Naive thymus-derived CD4-positive, alpha-beta T cell (primary cell): ENCODE measurements at regions of chr16 and their contacts with region 1.

Region 1: DNA sequence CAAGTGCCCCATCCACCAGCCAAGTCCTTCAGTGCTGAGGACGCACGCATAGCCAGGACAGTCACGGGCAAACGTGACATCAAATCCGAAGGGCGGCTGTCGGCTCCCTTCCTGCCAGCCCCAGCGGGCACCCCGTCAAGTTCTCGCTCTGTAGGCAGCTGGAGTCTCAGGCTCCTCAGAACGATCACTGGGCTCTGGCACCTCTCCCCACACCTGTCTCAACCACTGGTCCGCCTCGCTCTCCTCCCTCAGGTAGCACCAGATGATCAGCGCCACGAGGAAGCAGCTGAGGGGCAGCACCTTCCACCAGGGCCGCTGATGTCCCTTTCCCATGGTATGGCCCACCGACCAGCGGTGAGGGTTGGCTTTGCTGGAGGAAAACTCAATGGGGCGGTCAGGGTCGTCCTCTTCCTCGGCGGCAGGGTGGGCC is 421 bp downstream of the UQCC4 start:
- DNase-seq: peak in 1 of 9 donors; percentile 30
- ATAC-seq: no peak
- H3K4me3 ChIP-seq: peak overlapping the region; percentile 66
- H3K4me3 Mint-ChIP-seq: peak overlapping the region; percentile 90 to 94 (median 92)
- H3K27ac ChIP-seq: peak overlapping the region; percentile 95
- H3K27ac Mint-ChIP-seq: peak overlapping the region; percentile 25 to 98 (median 98)
- H3K4me1 ChIP-seq: peaks cover 6 to 11% of the 10 kb centered on the region in 2 donors
- H3K4me1 Mint-ChIP-seq: peaks cover 4 to 31% (median 20%) of the 10 kb centered on the region in 7 donors
- H3K27me3 ChIP-seq: no peaks in the 10 kb centered on the region
- H3K27me3 Mint-ChIP-seq: peaks cover 0 to 5% (median 0%) of the 10 kb centered on the region in 5 donors

Region 2: GRCh38 chr16:1351582-1352362 is 68.4 kb before region 1 on chr16 and contains the starts of genes GNPTG and TSR3:
- CTCF ChIA-PET with region 1: no interaction called
- POLR2A ChIA-PET with region 1: no interaction called
- intact Hi-C with region 1: loop called in 1 of 2 experiments (anchors 5 kb)
- DNase-seq: peak; percentile 77 to 96 (median 86)
- ATAC-seq: peak; percentile 93
- H3K4me3 ChIP-seq: peak within 1 kb of the TSS; percentile 71
- H3K4me3 Mint-ChIP-seq: peak within 1 kb of the TSS; percentile 81 to 90 (median 86)
- H3K27ac ChIP-seq: peak within 1 kb of the TSS; percentile 81
- H3K27ac Mint-ChIP-seq: peak within 1 kb of the TSS; percentile 75 to 96 (median 86)
- H3K4me1 ChIP-seq: peaks cover 13 to 21% of the 10 kb centered on the region in 2 donors
- H3K4me1 Mint-ChIP-seq: peaks cover 28 to 45% (median 34%) of the 10 kb centered on the region in 7 donors
- H3K27me3 ChIP-seq: no peaks in the 10 kb centered on the region
- H3K27me3 Mint-ChIP-seq: peaks cover 0 to 5% (median 0%) of the 10 kb centered on the region in 5 donors
- total RNA-seq, gene GNPTG: 37.9 to 57.7 (median 48.6) TPM
- total RNA-seq, gene TSR3: 21.0 to 50.4 (median 33.3) TPM

Region 3: GRCh38 chr16:1443403-1443973 is 23.4 kb after region 1 on chr16:
- CTCF ChIA-PET with region 1: no interaction called
- POLR2A ChIA-PET with region 1: no interaction called
- intact Hi-C with region 1: no loop called
- DNase-seq: no peak
- ATAC-seq: no peak
- H3K4me3 ChIP-seq: no peak overlapping the region
- H3K4me3 Mint-ChIP-seq: no peak overlapping the region
- H3K27ac ChIP-seq: no peak overlapping the region
- H3K27ac Mint-ChIP-seq: no peak overlapping the region
- H3K4me1 ChIP-seq: no peaks in the 10 kb centered on the region
- H3K4me1 Mint-ChIP-seq: no peaks in the 10 kb centered on the region
- H3K27me3 ChIP-seq: no peaks in the 10 kb centered on the region
- H3K27me3 Mint-ChIP-seq: no peaks in the 10 kb centered on the region

Region 4: DNA sequence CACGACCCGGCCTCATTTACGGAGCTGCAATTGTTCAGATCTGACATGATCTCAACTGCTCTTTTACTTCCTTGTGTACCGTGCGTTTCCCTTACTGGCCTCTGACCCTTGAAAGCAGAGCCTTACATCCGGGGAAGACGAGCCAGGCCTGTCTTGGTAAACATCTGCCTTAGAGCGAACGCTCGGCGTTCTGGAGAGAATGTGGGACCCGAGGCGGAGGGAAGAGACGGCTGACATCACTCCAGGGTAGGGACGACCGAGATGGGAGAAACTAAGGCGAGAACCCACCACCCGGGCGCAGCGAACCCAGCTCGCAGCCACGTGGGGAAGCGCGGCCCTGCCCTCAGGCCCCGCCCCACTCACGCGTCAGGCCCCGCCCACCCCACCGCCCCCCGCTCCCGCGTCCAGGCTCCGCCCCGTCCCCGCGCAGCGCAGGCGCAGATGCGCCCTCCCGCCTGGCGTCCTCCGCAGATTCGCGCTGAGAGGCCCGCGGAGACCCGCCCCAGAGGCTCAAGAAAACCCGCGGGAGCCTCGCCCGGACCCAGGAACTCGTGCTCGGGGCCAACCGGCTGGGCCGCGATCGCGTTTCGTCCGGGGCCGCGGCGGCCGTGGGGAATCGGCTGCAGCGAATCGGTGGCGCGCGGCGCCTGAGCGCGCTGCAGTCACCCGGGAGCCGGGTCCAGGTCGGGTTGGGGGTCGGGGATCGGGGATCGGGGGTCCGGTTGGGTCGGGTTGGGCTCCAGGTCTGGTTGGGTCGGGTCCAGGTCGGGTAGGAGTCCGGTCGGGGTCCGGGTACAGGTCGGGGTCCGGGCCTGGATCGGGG is 73.0 kb after region 1 on chr16 and contains the start of gene TELO2:
- CTCF ChIA-PET with region 1: interaction called, 4 read pairs
- POLR2A ChIA-PET with region 1: interaction called, 7 read pairs
- intact Hi-C with region 1: loop called (anchors 1 kb)
- DNase-seq: peak; percentile 82 to 96 (median 90)
- ATAC-seq: peak; percentile 96
- H3K4me3 ChIP-seq: peak within 1 kb of the TSS; percentile 59
- H3K4me3 Mint-ChIP-seq: peak within 1 kb of the TSS; percentile 83 to 99 (median 94)
- H3K27ac ChIP-seq: peak within 1 kb of the TSS; percentile 88
- H3K27ac Mint-ChIP-seq: peak within 1 kb of the TSS; percentile 97 to 100 (median 99)
- H3K4me1 ChIP-seq: peaks cover 12 to 17% of the 10 kb centered on the region in 2 donors
- H3K4me1 Mint-ChIP-seq: peaks cover 9 to 20% (median 12%) of the 10 kb centered on the region in 7 donors
- H3K27me3 ChIP-seq: no peaks in the 10 kb centered on the region
- H3K27me3 Mint-ChIP-seq: no peaks in the 10 kb centered on the region
- total RNA-seq, gene TELO2: 46.9 to 58.9 (median 50.3) TPM

Region 5: GRCh38 chr16:1677802-1678496 is 257.8 kb after region 1 on chr16 and contains the start of gene JPT2:
- CTCF ChIA-PET with region 1: interaction called, 3 read pairs
- POLR2A ChIA-PET with region 1: no interaction called
- intact Hi-C with region 1: loop called (anchors 1 kb)
- DNase-seq: peak; percentile 89 to 97 (median 94)
- ATAC-seq: peak; percentile 98
- H3K4me3 ChIP-seq: peak within 1 kb of the TSS; percentile 59
- H3K4me3 Mint-ChIP-seq: peak within 1 kb of the TSS; percentile 81 to 90 (median 88)
- H3K27ac ChIP-seq: peak within 1 kb of the TSS; percentile 78
- H3K27ac Mint-ChIP-seq: peak within 1 kb of the TSS; percentile 64 to 91 (median 78)
- H3K4me1 ChIP-seq: no peaks in the 10 kb centered on the region
- H3K4me1 Mint-ChIP-seq: peaks cover 24 to 42% (median 36%) of the 10 kb centered on the region in 7 donors
- H3K27me3 ChIP-seq: no peaks in the 10 kb centered on the region
- H3K27me3 Mint-ChIP-seq: no peaks in the 10 kb centered on the region
- total RNA-seq, gene JPT2: 12.6 to 67.2 (median 36.4) TPM

Region 6: GRCh38 chr16:1826691-1827575 is 406.8 kb after region 1 on chr16 and contains the starts of genes FAHD1 and HAGH:
- CTCF ChIA-PET with region 1: no interaction called
- POLR2A ChIA-PET with region 1: no interaction called
- intact Hi-C with region 1: loop called in 1 of 2 experiments (anchors 2 kb)
- DNase-seq: peak; percentile 83 to 98 (median 92)
- ATAC-seq: peak; percentile 91
- H3K4me3 ChIP-seq: peak within 1 kb of the TSS; percentile 99
- H3K4me3 Mint-ChIP-seq: peak within 1 kb of the TSS; percentile 82 to 98 (median 93)
- H3K27ac ChIP-seq: peak within 1 kb of the TSS; percentile 78
- H3K27ac Mint-ChIP-seq: peak within 1 kb of the TSS; percentile 85 to 94 (median 91)
- H3K4me1 ChIP-seq: peaks cover 19 to 26% of the 10 kb centered on the region in 2 donors
- H3K4me1 Mint-ChIP-seq: peaks cover 21 to 62% (median 44%) of the 10 kb centered on the region in 7 donors
- H3K27me3 ChIP-seq: no peaks in the 10 kb centered on the region
- H3K27me3 Mint-ChIP-seq: no peaks in the 10 kb centered on the region
- total RNA-seq, gene FAHD1: 7.8 to 12.9 (median 9.7) TPM
- total RNA-seq, gene HAGH: 46.2 to 72.9 (median 48.9) TPM